Activated CD4-positive, alpha-beta T cell treated with anti-CD3 and anti-CD28 coated beads for 36 hours (primary cell): ENCODE measurements at regions of chr1 and their contacts with region 1.

Region 1: DNA sequence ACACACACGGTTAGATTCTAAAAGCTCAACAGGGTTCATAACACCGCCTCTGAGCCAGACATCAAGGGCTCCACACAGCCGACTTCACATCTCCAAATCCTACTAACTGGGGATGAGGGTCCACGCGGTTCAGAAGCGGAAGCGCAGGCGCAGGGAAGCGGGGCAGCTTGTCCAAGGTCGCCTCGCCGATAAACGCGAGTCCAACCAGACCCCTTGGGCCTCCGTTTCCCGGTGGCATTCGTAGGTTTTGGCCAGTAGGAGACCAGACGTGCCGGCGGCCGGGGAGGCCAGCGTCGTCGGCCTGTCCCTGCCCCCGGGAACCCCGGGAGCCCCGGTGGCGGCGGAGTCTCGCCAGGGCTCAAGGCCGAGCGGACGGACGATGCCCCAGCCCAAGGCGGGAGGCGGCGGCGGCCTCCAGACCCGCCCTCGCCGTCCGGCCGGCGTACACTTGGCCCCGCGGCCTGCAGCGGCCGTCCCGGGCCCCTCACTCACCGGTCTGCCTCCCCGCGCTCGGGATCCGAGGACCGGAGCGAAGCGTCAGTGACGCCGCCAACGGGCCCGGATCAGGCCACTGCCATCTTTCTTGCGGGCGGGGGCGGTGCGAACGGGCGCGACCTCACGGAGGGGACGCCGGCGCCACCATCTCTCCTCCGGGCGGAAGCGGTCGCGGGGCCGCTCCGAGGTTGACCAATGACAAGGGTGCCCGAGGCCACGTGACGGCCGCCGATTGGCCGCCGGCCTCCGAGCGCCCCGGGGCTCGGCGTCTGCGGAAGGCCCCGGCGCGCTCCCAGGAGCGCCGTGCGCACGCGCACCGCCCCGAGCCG is at the start of gene SDF4:
- DNase-seq: peak; percentile 98
- ATAC-seq: peak; percentile 98
- H3K4me3 Mint-ChIP-seq: peak within 1 kb of the TSS; percentile 94
- H3K27ac Mint-ChIP-seq: peak within 1 kb of the TSS; percentile 91
- H3K4me1 Mint-ChIP-seq: peaks cover 35% of the 10 kb centered on the region
- H3K27me3 Mint-ChIP-seq: no peaks in the 10 kb centered on the region
- total RNA-seq, gene SDF4: 108 to 128 TPM

Region 2: GRCh38 chr1:1059494-1060280 is 171.9 kb before region 1 on chr1:
- CTCF ChIA-PET with region 1: no interaction called
- POLR2A ChIA-PET with region 1: no interaction called
- intact Hi-C with region 1: loop called in 1 of 2 experiments (anchors 1 kb)
- DNase-seq: peak; percentile 95
- ATAC-seq: peak; percentile 51
- H3K4me3 Mint-ChIP-seq: peak overlapping the region; percentile 82
- H3K27ac Mint-ChIP-seq: no peak overlapping the region
- H3K4me1 Mint-ChIP-seq: peaks cover 29% of the 10 kb centered on the region
- H3K27me3 Mint-ChIP-seq: peaks cover 20% of the 10 kb centered on the region

Region 3: GRCh38 chr1:1206376-1207260 is 25.0 kb before region 1 on chr1 and contains the start of gene TNFRSF18:
- CTCF ChIA-PET with region 1: interaction called, 3 read pairs
- POLR2A ChIA-PET with region 1: no interaction called
- intact Hi-C with region 1: loop called in 1 of 2 experiments (anchors 1 kb)
- DNase-seq: peak; percentile 75
- ATAC-seq: peak; percentile 7
- H3K4me3 Mint-ChIP-seq: peak within 1 kb of the TSS; percentile 77
- H3K27ac Mint-ChIP-seq: peak within 1 kb of the TSS; percentile 99
- H3K4me1 Mint-ChIP-seq: peaks cover 31% of the 10 kb centered on the region
- H3K27me3 Mint-ChIP-seq: no peaks in the 10 kb centered on the region
- total RNA-seq, gene TNFRSF18: 95.0 to 164 TPM

Region 4: GRCh38 chr1:1324521-1325287 is 93.1 kb after region 1 on chr1 and contains the starts of genes CPTP and INTS11:
- CTCF ChIA-PET with region 1: no interaction called
- POLR2A ChIA-PET with region 1: no interaction called
- intact Hi-C with region 1: loop called in 1 of 2 experiments (anchors 1 kb)
- DNase-seq: peak; percentile 98
- ATAC-seq: peak; percentile 90
- H3K4me3 Mint-ChIP-seq: peak within 1 kb of the TSS; percentile 80
- H3K27ac Mint-ChIP-seq: peak within 1 kb of the TSS; percentile 83
- H3K4me1 Mint-ChIP-seq: peaks cover 31% of the 10 kb centered on the region
- H3K27me3 Mint-ChIP-seq: no peaks in the 10 kb centered on the region
- total RNA-seq, gene CPTP: 9.9 to 11.4 TPM
- total RNA-seq, gene INTS11: 117 to 151 TPM

Region 5: GRCh38 chr1:1399187-1399871 is 167.7 kb after region 1 on chr1 and contains the start of gene CCNL2:
- CTCF ChIA-PET with region 1: no interaction called
- POLR2A ChIA-PET with region 1: no interaction called
- intact Hi-C with region 1: loop called in 1 of 2 experiments (anchors 1 kb)
- DNase-seq: peak; percentile 100
- ATAC-seq: peak; percentile 97
- H3K4me3 Mint-ChIP-seq: peak within 1 kb of the TSS; percentile 93
- H3K27ac Mint-ChIP-seq: peak within 1 kb of the TSS; percentile 91
- H3K4me1 Mint-ChIP-seq: peaks cover 52% of the 10 kb centered on the region
- H3K27me3 Mint-ChIP-seq: no peaks in the 10 kb centered on the region
- total RNA-seq, gene CCNL2: 73.6 to 89.7 TPM